Ascending aorta (tissue), 2 donors: ENCODE measurements at regions of chr7 and their contacts with region 1.

Region 1: DNA sequence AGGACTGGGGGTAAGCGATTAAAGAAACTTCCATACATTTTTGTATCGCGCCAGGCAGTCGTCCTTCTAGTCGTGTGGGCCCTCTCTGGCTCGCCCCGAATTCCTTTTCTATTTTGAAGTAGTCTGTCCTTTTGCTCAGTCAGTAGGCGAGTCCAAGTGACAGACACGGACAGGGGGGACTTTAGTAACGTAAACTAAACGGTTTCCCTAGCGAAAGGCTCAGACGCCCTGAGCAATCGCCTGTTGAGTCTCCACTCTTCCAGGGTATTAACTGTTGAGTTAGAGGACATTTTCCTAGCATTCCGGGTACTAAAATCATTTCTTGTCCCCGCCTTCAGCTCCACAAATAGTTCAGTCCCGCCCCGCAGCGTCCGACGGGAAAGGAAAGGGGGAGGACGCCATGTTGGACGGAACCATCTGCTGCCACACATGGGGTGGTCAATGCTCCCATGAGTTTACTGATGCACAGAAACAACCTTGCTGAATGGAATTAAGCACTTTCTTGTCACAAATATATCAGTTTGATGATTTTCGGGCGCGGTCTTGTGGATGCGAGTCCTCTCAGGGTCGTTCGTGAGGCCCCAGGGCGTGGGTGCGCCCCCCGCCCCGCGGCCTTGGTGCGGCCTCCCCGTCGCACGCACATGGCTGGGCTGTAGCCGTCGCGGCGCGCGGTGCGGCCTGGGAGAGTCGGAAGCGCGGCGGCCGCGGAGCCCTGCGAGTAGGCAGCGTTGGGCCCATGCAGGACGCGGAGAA is at the start of gene EIF3B:
- DNase-seq: peak; percentile 53 to 92
- H3K4me3 ChIP-seq: peak within 1 kb of the TSS; percentile 91
- H3K27ac ChIP-seq: peak within 1 kb of the TSS; percentile 98 to 99
- H3K4me1 ChIP-seq: peaks cover 16 to 21% of the 10 kb centered on the region in 2 donors
- H3K27me3 ChIP-seq: no peaks in the 10 kb centered on the region
- CTCF ChIP-seq: peak in 1 of 3 experiments; percentile 16
- total RNA-seq, gene EIF3B: 84.9 TPM

Region 2: DNA sequence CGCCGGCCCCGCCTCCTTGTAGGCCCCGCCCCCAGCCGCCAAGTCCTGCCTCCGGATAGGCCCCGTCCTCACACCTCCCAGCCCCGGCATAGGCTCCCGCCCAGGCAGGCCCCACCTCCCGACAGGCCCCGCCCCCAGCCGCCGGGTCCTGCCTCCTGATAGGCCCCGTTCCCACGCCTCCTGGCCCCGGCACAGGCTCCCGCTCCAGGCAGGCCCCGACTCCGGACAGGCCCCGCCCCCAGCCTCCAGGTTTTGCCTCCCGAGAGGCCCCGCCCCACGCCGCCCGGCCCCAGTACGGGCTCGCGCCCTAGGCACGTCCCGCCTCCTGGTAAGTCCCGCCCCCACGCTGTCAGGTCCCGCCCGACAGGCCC is 894.9 kb before region 1 on chr7:
- intact Hi-C with region 1: loop called (anchors 2 kb)
- DNase-seq: peak; percentile 97 to 100
- H3K4me3 ChIP-seq: peak overlapping the region; percentile 89 to 95
- H3K27ac ChIP-seq: peak overlapping the region; percentile 85 to 95
- H3K4me1 ChIP-seq: peaks cover 16 to 44% of the 10 kb centered on the region in 2 donors
- H3K27me3 ChIP-seq: no peaks in the 10 kb centered on the region
- CTCF ChIP-seq: no peak

Region 3: GRCh38 chr7:1579481-1580421 is 774.6 kb before region 1 on chr7:
- intact Hi-C with region 1: loop called (anchors 2 kb)
- DNase-seq: peak in 1 of 2 donors; percentile 75
- H3K4me3 ChIP-seq: no peak overlapping the region
- H3K27ac ChIP-seq: no peak overlapping the region
- H3K4me1 ChIP-seq: peaks cover 0 to 7% of the 10 kb centered on the region in 2 donors
- H3K27me3 ChIP-seq: no peaks in the 10 kb centered on the region
- CTCF ChIP-seq: peak; percentile 60 to 88 (median 88)

Region 4: DNA sequence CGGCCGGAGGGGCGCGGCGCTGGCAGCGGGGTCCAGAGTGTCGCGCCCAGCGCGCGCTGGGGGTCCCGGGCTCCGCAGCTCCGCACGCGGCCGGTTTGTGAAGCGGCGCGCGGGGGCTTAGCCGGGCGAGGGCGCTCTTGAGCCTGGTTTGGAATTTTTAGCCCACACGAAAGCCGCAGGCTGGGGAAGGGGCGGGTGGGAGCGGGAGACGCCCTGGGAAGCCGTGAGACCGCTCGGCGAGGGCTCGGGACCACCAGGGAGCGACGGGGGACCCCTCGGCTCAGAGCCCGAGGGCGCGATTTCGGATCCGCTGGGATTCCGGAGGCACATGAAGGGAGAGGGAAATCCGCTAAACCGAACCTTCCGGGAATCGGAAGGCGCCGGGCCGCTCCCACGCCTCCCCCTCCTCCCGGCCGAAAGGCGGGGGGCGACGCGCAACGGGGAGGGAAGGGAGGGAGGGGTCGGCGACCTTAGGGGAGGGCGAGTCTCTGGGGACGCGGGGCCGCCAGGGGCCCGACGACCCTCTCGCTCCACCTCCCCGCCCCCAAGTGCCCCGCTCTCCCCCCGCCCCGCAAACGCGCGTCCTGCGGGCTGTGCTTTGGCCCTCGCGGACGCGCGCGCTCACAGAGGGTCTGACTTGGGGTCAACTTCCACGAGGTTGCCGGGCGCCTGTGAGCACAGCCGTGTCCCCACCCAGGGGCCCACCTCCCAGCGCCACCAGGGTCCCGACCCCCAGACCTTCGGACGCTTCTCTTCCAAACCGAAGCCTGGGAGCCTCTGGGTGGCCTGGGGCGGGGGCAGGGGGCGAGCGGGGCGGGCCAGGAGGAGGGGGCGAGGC is 689.4 kb before region 1 on chr7:
- intact Hi-C with region 1: loop called (anchors 10 kb)
- DNase-seq: peak in 1 of 2 donors; percentile 68
- H3K4me3 ChIP-seq: peak overlapping the region; percentile 60 to 62
- H3K27ac ChIP-seq: no peak overlapping the region
- H3K4me1 ChIP-seq: peaks cover 18 to 26% of the 10 kb centered on the region in 2 donors
- H3K27me3 ChIP-seq: peaks cover 32% of the 10 kb centered on the region
- CTCF ChIP-seq: peak; percentile 58 to 80 (median 65)

Region 5: DNA sequence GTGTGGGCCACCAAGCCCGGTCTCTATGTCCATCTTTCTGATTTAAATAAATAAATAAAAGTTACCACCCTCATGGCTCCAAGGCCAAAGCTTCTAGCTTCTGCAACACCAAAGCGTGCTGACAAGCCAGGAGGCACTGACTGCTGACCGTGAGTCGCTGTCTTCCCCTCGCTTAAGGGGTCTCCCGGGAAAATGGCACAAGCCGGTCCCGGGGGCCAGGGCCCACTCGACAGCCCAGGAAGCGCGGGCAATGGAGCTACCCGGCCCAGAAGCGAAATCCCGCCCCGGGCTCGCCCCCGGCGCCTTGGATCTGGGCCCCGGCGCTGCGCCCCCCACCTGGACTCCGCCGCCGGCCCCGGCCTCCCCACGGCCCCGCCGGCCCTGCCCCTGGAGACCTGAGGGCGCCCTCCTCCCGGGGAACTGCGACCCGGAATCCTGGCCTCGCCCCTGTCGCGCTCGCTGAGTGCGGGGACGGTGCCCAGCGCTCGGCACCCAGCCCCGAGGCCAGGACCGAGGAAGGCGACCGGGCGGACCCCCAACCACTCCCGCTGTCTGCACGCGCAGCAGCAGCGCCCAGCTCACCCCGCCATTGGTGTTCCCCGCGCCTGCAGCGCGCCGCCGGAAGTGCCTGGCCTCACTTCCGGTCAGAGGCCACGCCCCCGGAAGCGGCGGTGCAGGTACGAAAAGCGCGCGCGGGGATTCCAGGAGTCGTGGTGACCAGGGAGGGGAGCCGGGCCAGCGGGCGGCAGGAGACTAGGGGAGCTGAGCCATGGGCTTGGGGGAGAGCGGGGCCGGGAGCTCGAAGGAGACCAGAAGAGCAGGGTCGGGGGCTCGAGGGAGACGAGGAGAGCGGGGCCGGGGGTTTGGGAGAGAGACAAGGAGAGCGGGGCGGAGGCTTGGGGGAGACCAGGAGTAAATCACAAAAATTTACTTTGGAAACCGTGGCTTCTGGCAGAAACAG is 112.5 kb before region 1 on chr7 and contains the starts of genes MRM2 and NUDT1:
- intact Hi-C with region 1: loop called (anchors 5 kb)
- DNase-seq: peak; percentile 16 to 92
- H3K4me3 ChIP-seq: peak within 1 kb of the TSS; percentile 74 to 91
- H3K27ac ChIP-seq: peak within 1 kb of the TSS; percentile 27 to 52
- H3K4me1 ChIP-seq: peaks cover 3 to 16% of the 10 kb centered on the region in 2 donors
- H3K27me3 ChIP-seq: no peaks in the 10 kb centered on the region
- CTCF ChIP-seq: no peak
- total RNA-seq, gene MRM2: 6.7 TPM
- total RNA-seq, gene NUDT1: 9.0 TPM

Region 6: GRCh38 chr7:2314209-2314955 is 40.0 kb before region 1 on chr7 and contains the start of gene SNX8:
- intact Hi-C with region 1: loop called (anchors 1 kb)
- DNase-seq: peak; percentile 51 to 88
- H3K4me3 ChIP-seq: peak within 1 kb of the TSS; percentile 77 to 93
- H3K27ac ChIP-seq: peak within 1 kb of the TSS; percentile 65 to 69
- H3K4me1 ChIP-seq: peaks cover 0 to 7% of the 10 kb centered on the region in 2 donors
- H3K27me3 ChIP-seq: no peaks in the 10 kb centered on the region
- CTCF ChIP-seq: no peak
- total RNA-seq, gene SNX8: 12.2 TPM

Region 7: GRCh38 chr7:2373124-2373556 is 18.8 kb after region 1 on chr7:
- intact Hi-C with region 1: no loop called
- DNase-seq: no peak
- H3K4me3 ChIP-seq: no peak overlapping the region
- H3K27ac ChIP-seq: no peak overlapping the region
- H3K4me1 ChIP-seq: no peaks in the 10 kb centered on the region
- H3K27me3 ChIP-seq: no peaks in the 10 kb centered on the region
- CTCF ChIP-seq: no peak

Region 8: DNA sequence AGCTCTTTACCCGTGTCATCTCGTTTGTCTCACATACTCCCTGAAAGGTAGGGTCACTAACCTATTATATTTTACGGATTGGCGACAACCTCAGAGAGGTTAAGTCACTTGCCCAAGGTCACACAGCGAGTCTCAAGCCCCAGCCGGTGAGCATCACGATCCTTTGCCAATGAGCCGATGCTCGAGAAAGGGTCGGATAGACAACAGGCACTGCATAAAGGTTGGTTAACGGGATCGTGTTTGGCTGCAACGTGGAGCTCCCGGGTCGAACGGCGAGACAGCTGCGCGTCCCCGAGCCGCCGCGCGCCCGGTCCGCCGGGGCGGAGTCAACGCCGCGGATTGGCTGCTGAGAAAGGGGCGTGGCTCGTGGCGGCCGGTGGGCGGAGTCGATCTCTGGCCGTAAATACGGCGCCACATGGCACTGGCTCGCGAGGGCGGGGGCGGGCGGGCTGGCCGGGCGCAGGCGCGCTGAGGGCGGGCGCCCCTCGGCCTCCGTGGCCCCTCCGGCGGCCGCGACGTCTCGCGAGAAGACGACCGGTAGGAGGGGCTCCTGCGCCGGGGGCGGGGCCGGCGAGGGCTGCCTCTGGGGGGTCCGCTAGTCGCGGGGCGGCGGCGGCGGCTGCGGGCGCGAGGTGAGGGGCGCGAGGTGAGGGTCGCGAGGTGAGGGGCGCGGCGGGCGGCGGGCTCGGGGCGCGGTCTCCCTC is 48.8 kb after region 1 on chr7 and contains the start of gene CHST12:
- intact Hi-C with region 1: loop called (anchors 1 kb)
- DNase-seq: peak; percentile 73 to 96
- H3K4me3 ChIP-seq: peak within 1 kb of the TSS; percentile 99
- H3K27ac ChIP-seq: peak within 1 kb of the TSS; percentile 66 to 78
- H3K4me1 ChIP-seq: peaks cover 14 to 29% of the 10 kb centered on the region in 2 donors
- H3K27me3 ChIP-seq: no peaks in the 10 kb centered on the region
- CTCF ChIP-seq: no peak
- total RNA-seq, gene CHST12: 79.4 TPM